BJ (cell line): ENCODE measurements at regions of chr17 and their contacts with region 1.

Region 1: GRCh38 chr17:75779231-75779986 is 5.2 kb upstream of the UNK start:
- DNase-seq: peak; percentile 99
- H3K4me3 ChIP-seq: peak overlapping the region; percentile 94
- H3K27me3 ChIP-seq: no peaks in the 10 kb centered on the region
- CTCF ChIP-seq: no peak

Region 2: GRCh38 chr17:75549221-75550138 is 229.9 kb before region 1 on chr17:
- CTCF ChIA-PET with region 1: no interaction called
- POLR2A ChIA-PET with region 1: interaction called, 11 read pairs
- DNase-seq: no peak
- H3K4me3 ChIP-seq: no peak overlapping the region
- H3K27me3 ChIP-seq: no peaks in the 10 kb centered on the region
- CTCF ChIP-seq: no peak

Region 3: GRCh38 chr17:75764711-75765421 is 14.5 kb before region 1 on chr17 and contains the start of gene GALK1:
- CTCF ChIA-PET with region 1: interaction called, 48 read pairs
- POLR2A ChIA-PET with region 1: interaction called, 12 read pairs
- DNase-seq: no peak
- H3K4me3 ChIP-seq: peak within 1 kb of the TSS; percentile 78
- H3K27me3 ChIP-seq: no peaks in the 10 kb centered on the region
- CTCF ChIP-seq: peak; percentile 71
- polyA plus RNA-seq, gene GALK1: 19.9 and 35.8 TPM in 2 replicates

Region 4: GRCh38 chr17:75814900-75815373 is 35.5 kb after region 1 on chr17:
- CTCF ChIA-PET with region 1: interaction called, 3 read pairs
- POLR2A ChIA-PET with region 1: interaction called, 15 read pairs
- DNase-seq: peak; percentile 26
- H3K4me3 ChIP-seq: no peak overlapping the region
- H3K27me3 ChIP-seq: no peaks in the 10 kb centered on the region
- CTCF ChIP-seq: no peak

Region 5: GRCh38 chr17:76103274-76104139 is 324.1 kb after region 1 on chr17 and contains the start of gene EXOC7:
- CTCF ChIA-PET with region 1: no interaction called
- POLR2A ChIA-PET with region 1: no interaction called
- DNase-seq: peak; percentile 39
- H3K4me3 ChIP-seq: peak within 1 kb of the TSS; percentile 98
- H3K27me3 ChIP-seq: no peaks in the 10 kb centered on the region
- CTCF ChIP-seq: peak; percentile 24; the same call in 1 of the 2 replicates
- polyA plus RNA-seq, gene EXOC7: 91.7 and 122 TPM in 2 replicates